ENCODE measurements at regions of chr17 and their contacts with region 1.

Region 1: GRCh38 chr17:48001197-48001596 is 30.3 kb downstream of the CDK5RAP3 start:
- DNase-seq: no peak
- H3K27ac ChIP-seq: no peak overlapping the region
- CTCF ChIP-seq: no peak

Region 2: GRCh38 chr17:48100591-48101011 is 99.4 kb after region 1 on chr17:
- CTCF ChIA-PET with region 1: no interaction called
- POLR2A ChIA-PET with region 1: interaction called, 13 read pairs
- DNase-seq: peak; percentile 67
- H3K27ac ChIP-seq: peak overlapping the region; percentile 98
- CTCF ChIP-seq: no peak